Vagina (tissue), 2 donors: ENCODE measurements at regions of chr5 and their contacts with region 1.

Region 1: DNA sequence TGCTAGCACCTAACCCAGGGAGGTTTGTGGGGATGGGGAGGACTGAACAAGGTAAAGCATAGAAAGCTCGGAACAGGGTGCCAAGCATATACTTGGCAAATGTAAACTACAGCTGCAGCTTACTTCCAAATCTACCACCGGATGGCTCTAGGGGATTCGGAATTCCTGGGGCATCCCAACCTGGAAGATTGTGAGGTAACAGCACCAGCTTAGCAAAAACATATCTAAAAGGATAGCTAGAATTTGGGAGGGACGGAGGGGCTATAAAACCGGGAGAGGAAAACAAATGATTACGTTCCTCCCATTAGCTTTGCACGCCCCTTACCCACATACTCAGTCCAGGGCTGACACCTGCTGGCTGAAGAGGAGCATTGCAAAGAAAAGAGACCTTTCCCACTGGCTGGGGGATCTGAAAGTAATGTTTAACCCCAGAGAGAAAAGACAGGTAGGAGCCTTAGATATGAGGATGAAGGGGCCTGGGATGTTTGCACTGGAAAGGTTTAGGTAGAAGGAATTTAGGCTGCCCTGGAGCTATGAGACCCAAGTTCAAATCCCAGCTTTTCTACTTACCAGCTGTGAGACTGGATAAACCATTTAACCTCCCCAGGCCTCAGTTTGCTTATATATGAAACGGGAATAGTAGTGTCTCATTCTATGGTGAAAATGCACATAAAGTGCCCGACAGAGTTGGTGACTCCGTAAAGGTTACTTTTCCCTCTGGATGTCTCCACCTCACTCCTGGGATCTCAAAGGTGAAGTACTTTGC is 73.6 kb downstream of the FAM114A2 start:
- DNase-seq: no peak
- H3K4me3 ChIP-seq: no peak overlapping the region
- H3K27ac ChIP-seq: no peak overlapping the region
- H3K4me1 ChIP-seq: no peaks in the 10 kb centered on the region
- H3K27me3 ChIP-seq: no peaks in the 10 kb centered on the region
- CTCF ChIP-seq: peak; percentile 31 to 85 (median 76)
- POLR2A ChIP-seq: no peak

Region 2: DNA sequence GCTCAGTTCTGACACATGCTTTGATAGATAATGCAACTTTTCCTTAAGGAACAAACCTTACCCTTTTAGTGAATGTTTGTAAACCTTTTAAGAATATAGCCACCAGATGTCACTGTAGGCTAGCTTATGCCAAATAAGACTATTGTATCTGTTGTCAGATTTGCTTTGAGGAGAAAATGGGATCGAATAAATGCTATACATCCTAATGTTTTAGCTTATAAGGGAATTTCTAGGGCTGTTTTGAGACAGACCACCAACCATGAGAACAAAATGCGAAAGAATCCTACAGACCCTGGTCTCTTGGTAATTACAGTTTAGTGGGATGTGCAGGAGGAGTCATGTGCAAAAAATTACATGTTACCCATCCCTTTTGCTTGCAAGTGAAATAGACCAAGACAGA is 1432.3 kb before region 1 on chr5:
- intact Hi-C with region 1: loop called (anchors 5 kb)
- DNase-seq: no peak
- H3K4me3 ChIP-seq: no peak overlapping the region
- H3K27ac ChIP-seq: no peak overlapping the region
- H3K4me1 ChIP-seq: no peaks in the 10 kb centered on the region
- H3K27me3 ChIP-seq: no peaks in the 10 kb centered on the region
- CTCF ChIP-seq: peak in 2 of 3 experiments; percentile 40 to 43
- POLR2A ChIP-seq: no peak

Region 3: GRCh38 chr5:153496835-153497234 is 468.2 kb before region 1 on chr5:
- intact Hi-C with region 1: loop called (anchors 10 kb)
- DNase-seq: no peak
- H3K4me3 ChIP-seq: no peak overlapping the region
- H3K27ac ChIP-seq: no peak overlapping the region
- H3K4me1 ChIP-seq: no peaks in the 10 kb centered on the region
- H3K27me3 ChIP-seq: no peaks in the 10 kb centered on the region
- CTCF ChIP-seq: peak in 2 of 3 experiments; percentile 7 to 24
- POLR2A ChIP-seq: no peak